ENCODE measurements at regions of chr5 and their contacts with region 1.

Region 1: GRCh38 chr5:56710826-56711590 is 104.3 kb upstream of the MAP3K1 start:
- DNase-seq: peak; percentile 40
- H3K4me3 Mint-ChIP-seq: no peak overlapping the region
- H3K27ac Mint-ChIP-seq: peak overlapping the region; percentile 11
- H3K4me1 Mint-ChIP-seq: peaks cover 26% of the 10 kb centered on the region
- H3K27me3 Mint-ChIP-seq: no peaks in the 10 kb centered on the region

Region 2: GRCh38 chr5:56656816-56657729 is 53.9 kb before region 1 on chr5:
- CTCF ChIA-PET with region 1: no interaction called
- POLR2A ChIA-PET with region 1: no interaction called
- intact Hi-C with region 1: loop called (anchors 5 kb)
- DNase-seq: no peak
- H3K4me3 Mint-ChIP-seq: no peak overlapping the region
- H3K27ac Mint-ChIP-seq: no peak overlapping the region
- H3K4me1 Mint-ChIP-seq: peaks cover 27% of the 10 kb centered on the region
- H3K27me3 Mint-ChIP-seq: no peaks in the 10 kb centered on the region

Region 3: GRCh38 chr5:56737002-56737621 is 26.1 kb after region 1 on chr5:
- CTCF ChIA-PET with region 1: no interaction called
- POLR2A ChIA-PET with region 1: no interaction called
- intact Hi-C with region 1: loop called (anchors 2 kb)
- DNase-seq: peak; percentile 28
- H3K4me3 Mint-ChIP-seq: no peak overlapping the region
- H3K27ac Mint-ChIP-seq: peak overlapping the region; percentile 66
- H3K4me1 Mint-ChIP-seq: peaks cover 33% of the 10 kb centered on the region
- H3K27me3 Mint-ChIP-seq: no peaks in the 10 kb centered on the region

Region 4: GRCh38 chr5:57779383-57780223 is 1068.6 kb after region 1 on chr5:
- CTCF ChIA-PET with region 1: no interaction called
- POLR2A ChIA-PET with region 1: no interaction called
- intact Hi-C with region 1: no loop called
- DNase-seq: peak; percentile 21
- H3K4me3 Mint-ChIP-seq: no peak overlapping the region
- H3K27ac Mint-ChIP-seq: no peak overlapping the region
- H3K4me1 Mint-ChIP-seq: no peaks in the 10 kb centered on the region
- H3K27me3 Mint-ChIP-seq: peaks cover 6% of the 10 kb centered on the region

Measured in activated CD4-positive, alpha-beta memory T cell treated with anti-CD3 and anti-CD28 coated beads for 36 hours (primary cell).